Left ventricle myocardium inferior (tissue), 1 donor: ENCODE measurements at regions of chr6 and their contacts with region 1.

Region 1: DNA sequence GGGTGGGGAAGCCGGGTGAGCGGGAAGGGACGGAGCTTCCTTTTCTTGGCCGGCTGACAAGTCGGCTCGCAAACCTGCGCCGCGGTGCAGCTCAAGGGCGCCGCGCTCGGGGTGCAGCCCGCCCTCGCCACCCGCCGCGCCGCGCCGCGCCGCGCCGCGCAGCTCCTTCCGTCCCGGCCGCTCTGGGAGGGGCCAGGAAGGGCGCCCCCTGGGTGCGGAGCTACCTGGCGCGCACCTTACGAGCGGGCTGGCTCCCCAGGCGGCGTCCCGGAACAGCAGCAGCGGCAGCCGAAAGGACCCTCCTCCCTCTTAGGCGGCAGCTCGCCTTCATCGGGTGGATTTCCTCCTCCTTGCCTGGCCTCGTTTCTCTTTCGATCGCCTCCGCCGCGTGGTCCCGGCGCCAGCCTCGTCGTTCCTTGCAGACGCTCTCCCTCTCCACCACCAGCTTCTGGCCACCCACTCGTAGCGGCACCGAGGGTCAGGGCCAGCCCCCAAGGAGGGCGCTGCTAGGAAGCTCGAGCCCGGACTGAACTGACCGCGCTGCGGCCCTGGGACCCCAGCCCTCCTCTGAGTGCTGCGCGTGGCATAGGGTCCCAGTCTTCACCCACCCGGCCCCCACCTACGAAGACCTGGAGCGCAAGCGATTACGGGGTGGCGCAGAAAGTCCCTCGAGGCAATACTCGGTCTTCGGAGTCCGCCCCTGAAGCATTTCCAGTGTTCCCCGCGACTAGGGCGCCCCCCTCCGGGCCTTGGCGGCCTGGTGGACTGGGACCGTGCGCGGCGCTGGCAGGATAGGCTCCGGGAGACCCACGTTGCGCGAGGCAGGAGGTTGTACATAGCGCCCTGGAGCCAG is at the start of gene MAP3K5:
- DNase-seq: peak; percentile 93
- H3K4me3 ChIP-seq: peak within 1 kb of the TSS; percentile 92
- H3K27ac ChIP-seq: peak within 1 kb of the TSS; percentile 96
- H3K4me1 ChIP-seq: peaks cover 45% of the 10 kb centered on the region
- H3K27me3 ChIP-seq: no peaks in the 10 kb centered on the region
- CTCF ChIP-seq: peak; percentile 76
- total RNA-seq, gene MAP3K5: 44.1 TPM

Region 2: DNA sequence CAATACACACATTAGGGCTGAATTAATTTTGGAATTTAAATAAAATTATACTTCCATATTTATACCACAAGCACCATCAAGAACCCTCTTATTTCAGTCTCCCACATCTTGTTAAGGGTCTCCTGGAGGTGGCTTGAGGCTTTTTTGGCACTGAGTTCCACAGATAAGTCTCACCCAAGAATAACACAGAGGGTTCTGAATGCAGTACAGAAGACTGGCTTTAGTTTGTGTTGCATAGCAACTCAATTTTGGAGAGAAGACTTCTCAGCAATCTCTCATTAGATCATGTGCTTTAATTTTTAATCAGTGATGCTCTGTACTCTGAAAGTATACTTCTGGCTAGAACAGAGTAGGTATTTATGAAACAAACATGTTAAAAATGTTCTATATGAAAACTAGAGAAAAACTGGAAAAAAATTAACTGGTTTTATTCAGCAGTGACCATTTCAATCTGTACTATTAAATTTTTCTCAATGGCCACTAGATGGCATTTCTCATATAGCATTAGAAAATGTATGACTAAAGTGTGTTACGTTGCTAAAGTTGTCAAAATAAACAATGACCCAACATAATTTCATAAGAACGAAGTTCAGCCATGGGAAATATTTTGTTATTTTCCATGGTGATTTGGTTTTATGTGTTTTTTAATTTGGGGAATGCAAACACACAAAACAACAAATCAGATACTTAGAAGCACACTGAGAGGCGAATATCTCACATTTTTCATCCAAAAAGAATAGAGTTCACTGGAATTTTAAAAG is 209.7 kb before region 1 on chr6:
- intact Hi-C with region 1: loop called (anchors 10 kb)
- DNase-seq: no peak
- H3K4me3 ChIP-seq: no peak overlapping the region
- H3K27ac ChIP-seq: peak overlapping the region; percentile 36
- H3K4me1 ChIP-seq: peaks cover 37% of the 10 kb centered on the region
- H3K27me3 ChIP-seq: no peaks in the 10 kb centered on the region
- CTCF ChIP-seq: peak; percentile 62

Region 3: GRCh38 chr6:136643850-136644596 is 148.6 kb before region 1 on chr6:
- intact Hi-C with region 1: loop called (anchors 2 kb)
- DNase-seq: peak; percentile 87
- H3K4me3 ChIP-seq: no peak overlapping the region
- H3K27ac ChIP-seq: peak overlapping the region; percentile 74
- H3K4me1 ChIP-seq: peaks cover 61% of the 10 kb centered on the region
- H3K27me3 ChIP-seq: no peaks in the 10 kb centered on the region
- CTCF ChIP-seq: peak; percentile 87

Region 4: DNA sequence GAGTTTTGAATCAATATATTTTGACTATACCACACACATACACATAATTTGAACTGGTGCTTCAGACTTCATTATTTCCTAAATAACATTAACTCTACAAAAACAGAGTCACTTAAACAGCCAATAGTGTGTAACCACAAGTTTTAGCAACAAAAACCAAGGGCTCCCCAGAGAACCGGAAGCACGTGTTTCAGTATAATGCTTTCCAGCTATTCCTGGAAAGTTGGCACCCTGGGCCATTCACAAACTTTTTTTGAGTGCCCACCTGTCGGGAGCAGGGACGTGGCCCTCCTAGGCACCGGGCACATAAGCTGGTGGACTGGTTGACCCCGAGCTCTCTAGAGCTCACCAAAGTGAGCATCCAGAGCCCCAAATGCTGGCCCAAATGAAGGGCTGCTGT is 127.6 kb after region 1 on chr6:
- intact Hi-C with region 1: no loop called
- DNase-seq: no peak
- H3K4me3 ChIP-seq: peak overlapping the region; percentile 73
- H3K27ac ChIP-seq: no peak overlapping the region
- H3K4me1 ChIP-seq: peaks cover 36% of the 10 kb centered on the region
- H3K27me3 ChIP-seq: peaks cover 76% of the 10 kb centered on the region
- CTCF ChIP-seq: no peak